ENCODE measurements at regions of chr13 and their contacts with region 1.

Region 1: GRCh38 chr13:80342471-80343380 is 1.8 kb upstream of the SPRY2 start:
- DNase-seq: peak; percentile 83
- H3K4me3 Mint-ChIP-seq: no peak overlapping the region
- H3K27ac Mint-ChIP-seq: no peak overlapping the region
- H3K4me1 Mint-ChIP-seq: peaks cover 16% of the 10 kb centered on the region
- H3K27me3 Mint-ChIP-seq: no peaks in the 10 kb centered on the region
- CTCF ChIP-seq: peak; percentile 86

Region 2: GRCh38 chr13:79548902-79549301 is 793.8 kb before region 1 on chr13:
- CTCF ChIA-PET with region 1: interaction called, 4 read pairs
- POLR2A ChIA-PET with region 1: interaction called, 3 read pairs
- intact Hi-C with region 1: loop called (anchors 2 kb)
- DNase-seq: peak; percentile 45
- H3K4me3 Mint-ChIP-seq: no peak overlapping the region
- H3K27ac Mint-ChIP-seq: peak overlapping the region; percentile 79
- H3K4me1 Mint-ChIP-seq: peaks cover 7% of the 10 kb centered on the region
- H3K27me3 Mint-ChIP-seq: no peaks in the 10 kb centered on the region
- CTCF ChIP-seq: peak; percentile 34

Region 3: DNA sequence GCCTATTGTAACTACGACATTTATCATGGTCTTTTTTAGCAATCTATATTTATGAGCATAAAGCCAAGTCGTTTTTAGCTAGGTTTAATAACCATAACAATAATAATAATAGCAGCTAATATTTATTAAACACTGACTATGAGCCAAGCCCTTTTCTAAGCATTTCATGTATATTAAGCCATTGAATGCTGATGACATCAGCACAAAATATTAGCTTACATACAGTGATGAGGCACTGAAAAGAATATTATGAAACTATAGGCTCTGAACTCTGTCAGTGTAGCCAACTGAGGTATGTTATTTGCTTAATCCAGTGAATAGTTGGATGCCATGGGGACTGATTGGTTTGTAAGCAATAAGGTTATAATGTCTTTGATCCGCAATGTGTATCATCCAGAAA is 626.5 kb before region 1 on chr13:
- CTCF ChIA-PET with region 1: interaction called, 10 read pairs
- POLR2A ChIA-PET with region 1: no interaction called
- intact Hi-C with region 1: no loop called
- DNase-seq: no peak
- H3K4me3 Mint-ChIP-seq: no peak overlapping the region
- H3K27ac Mint-ChIP-seq: no peak overlapping the region
- H3K4me1 Mint-ChIP-seq: peaks cover 6% of the 10 kb centered on the region
- H3K27me3 Mint-ChIP-seq: no peaks in the 10 kb centered on the region
- CTCF ChIP-seq: no peak

Region 4: GRCh38 chr13:80086304-80086721 is 256.4 kb before region 1 on chr13:
- CTCF ChIA-PET with region 1: no interaction called
- POLR2A ChIA-PET with region 1: interaction called, 4 read pairs
- intact Hi-C with region 1: loop called (anchors 5 kb)
- DNase-seq: peak; percentile 41
- H3K4me3 Mint-ChIP-seq: no peak overlapping the region
- H3K27ac Mint-ChIP-seq: peak overlapping the region; percentile 10
- H3K4me1 Mint-ChIP-seq: peaks cover 34% of the 10 kb centered on the region
- H3K27me3 Mint-ChIP-seq: no peaks in the 10 kb centered on the region
- CTCF ChIP-seq: no peak

Region 5: GRCh38 chr13:80290591-80290990 is 52.1 kb before region 1 on chr13:
- CTCF ChIA-PET with region 1: no interaction called
- POLR2A ChIA-PET with region 1: no interaction called
- intact Hi-C with region 1: no loop called
- DNase-seq: no peak
- H3K4me3 Mint-ChIP-seq: no peak overlapping the region
- H3K27ac Mint-ChIP-seq: no peak overlapping the region
- H3K4me1 Mint-ChIP-seq: no peaks in the 10 kb centered on the region
- H3K27me3 Mint-ChIP-seq: no peaks in the 10 kb centered on the region
- CTCF ChIP-seq: no peak

Region 6: DNA sequence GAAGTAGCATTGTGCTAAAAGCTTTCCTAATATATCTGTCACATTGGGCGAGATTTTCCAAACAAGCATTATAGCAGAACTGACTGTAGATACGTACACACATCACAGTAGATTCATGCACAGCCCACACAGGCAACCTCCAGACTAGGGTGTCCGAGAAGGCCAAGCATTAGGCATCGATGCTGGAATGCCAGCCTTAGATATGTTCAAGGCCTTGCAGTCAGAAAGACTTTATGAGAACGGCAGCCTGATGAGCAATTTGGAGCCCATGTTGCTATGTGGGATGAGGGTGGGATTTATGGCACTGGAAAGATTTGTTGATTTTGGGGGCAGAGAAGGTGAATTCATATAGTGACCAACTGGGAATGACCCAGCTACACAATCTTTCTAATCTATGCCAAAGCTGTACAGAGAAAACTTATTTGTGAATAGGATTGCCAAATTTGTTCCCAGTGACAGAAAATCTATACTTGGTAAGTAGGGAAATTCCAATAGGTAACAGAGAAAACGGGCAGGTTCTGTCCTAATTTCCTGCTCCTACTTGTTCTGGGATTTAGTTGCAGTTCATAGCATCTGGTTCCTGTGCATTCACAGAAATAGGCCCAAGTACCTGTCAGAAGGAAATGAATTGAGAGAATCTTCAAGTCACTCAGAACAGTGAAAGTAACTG is 29.2 kb after region 1 on chr13:
- CTCF ChIA-PET with region 1: interaction called, 16 read pairs
- POLR2A ChIA-PET with region 1: no interaction called
- intact Hi-C with region 1: no loop called
- DNase-seq: no peak
- H3K4me3 Mint-ChIP-seq: no peak overlapping the region
- H3K27ac Mint-ChIP-seq: no peak overlapping the region
- H3K4me1 Mint-ChIP-seq: peaks cover 14% of the 10 kb centered on the region
- H3K27me3 Mint-ChIP-seq: no peaks in the 10 kb centered on the region
- CTCF ChIP-seq: no peak

Region 7: GRCh38 chr13:80873589-80873988 is 530.9 kb after region 1 on chr13:
- CTCF ChIA-PET with region 1: interaction called, 4 read pairs
- POLR2A ChIA-PET with region 1: no interaction called
- intact Hi-C with region 1: loop called (anchors 5 kb)
- DNase-seq: no peak
- H3K4me3 Mint-ChIP-seq: no peak overlapping the region
- H3K27ac Mint-ChIP-seq: no peak overlapping the region
- H3K4me1 Mint-ChIP-seq: peaks cover 9% of the 10 kb centered on the region
- H3K27me3 Mint-ChIP-seq: no peaks in the 10 kb centered on the region
- CTCF ChIP-seq: no peak

Region 8: GRCh38 chr13:80979035-80979641 is 636.4 kb after region 1 on chr13:
- CTCF ChIA-PET with region 1: interaction called, 5 read pairs
- POLR2A ChIA-PET with region 1: interaction called, 5 read pairs
- intact Hi-C with region 1: loop called (anchors 1 kb)
- DNase-seq: peak; percentile 65
- H3K4me3 Mint-ChIP-seq: no peak overlapping the region
- H3K27ac Mint-ChIP-seq: no peak overlapping the region
- H3K4me1 Mint-ChIP-seq: no peaks in the 10 kb centered on the region
- H3K27me3 Mint-ChIP-seq: no peaks in the 10 kb centered on the region
- CTCF ChIP-seq: peak; percentile 81